Activated B cell treated with CpG ODN at 0.5 μM for 24 hours (primary cell): ENCODE measurements at regions of chr17 and their contacts with region 1.

Region 1: DNA sequence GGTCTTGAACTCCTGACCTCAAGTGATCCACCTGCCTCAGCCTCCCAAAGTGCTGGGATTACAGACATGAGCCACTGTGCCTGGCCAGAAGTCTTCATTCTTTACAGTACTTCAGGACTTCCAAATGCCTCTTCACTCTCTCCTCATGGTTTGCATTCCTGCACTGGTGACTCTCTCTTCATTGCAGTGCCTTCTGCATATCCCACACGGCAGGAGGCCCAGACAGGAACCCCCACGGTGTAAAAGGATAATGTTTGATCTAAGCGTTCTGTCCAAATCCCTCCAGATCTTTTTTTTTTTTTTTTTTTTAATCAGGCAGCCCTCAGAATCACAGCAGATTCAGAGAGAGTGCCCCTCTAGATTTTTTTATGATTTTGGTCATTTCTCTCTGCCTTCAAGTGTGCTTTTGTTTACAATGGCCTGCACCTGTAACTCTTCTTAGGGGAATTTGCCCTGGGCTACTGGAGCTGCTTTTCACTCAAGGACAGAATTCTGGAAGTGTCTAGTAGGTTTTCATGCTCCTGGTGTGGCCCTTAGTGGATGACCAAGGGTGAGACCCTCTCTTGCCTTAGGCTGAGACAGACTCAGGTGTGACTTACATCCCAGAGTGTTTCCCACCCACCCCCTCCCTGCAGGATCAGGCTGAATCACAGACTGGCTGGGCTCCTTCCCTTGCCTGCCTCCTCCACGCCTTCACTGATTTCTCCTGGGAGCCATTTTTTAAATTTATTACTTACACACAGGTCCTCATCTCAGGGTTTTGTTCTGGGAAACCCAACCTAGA is 19.8 kb upstream of the NF1 start:
- DNase-seq: no peak
- ATAC-seq: no peak
- H3K4me3 Mint-ChIP-seq: no peak overlapping the region
- H3K27ac Mint-ChIP-seq: no peak overlapping the region
- H3K4me1 Mint-ChIP-seq: no peaks in the 10 kb centered on the region
- H3K27me3 Mint-ChIP-seq: no peaks in the 10 kb centered on the region
- CTCF ChIP-seq: no peak

Region 2: DNA sequence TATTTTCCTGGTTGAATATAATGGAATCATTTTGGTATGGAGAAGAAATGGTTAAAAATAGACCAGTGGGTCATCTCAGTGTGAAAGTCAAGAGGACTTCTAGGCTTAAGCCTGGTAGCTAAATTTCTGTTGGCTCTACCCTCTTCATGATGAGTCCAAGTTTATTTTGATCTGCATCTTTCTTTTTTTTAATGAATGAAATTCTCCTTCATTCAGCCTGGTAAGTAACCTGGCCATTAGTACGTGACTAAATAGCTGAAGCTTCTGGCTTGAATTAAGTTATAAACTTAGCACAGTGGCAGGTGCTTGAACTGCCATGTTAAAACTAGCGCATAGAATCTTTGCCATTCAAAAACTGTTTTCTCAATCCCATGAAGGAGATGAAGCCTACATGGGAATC is 47.8 kb after region 1 on chr17:
- CTCF ChIA-PET with region 1: no interaction called
- POLR2A ChIA-PET with region 1: no interaction called
- intact Hi-C with region 1: no loop called
- DNase-seq: no peak
- ATAC-seq: no peak
- H3K4me3 Mint-ChIP-seq: no peak overlapping the region
- H3K27ac Mint-ChIP-seq: no peak overlapping the region
- H3K4me1 Mint-ChIP-seq: no peaks in the 10 kb centered on the region
- H3K27me3 Mint-ChIP-seq: no peaks in the 10 kb centered on the region
- CTCF ChIP-seq: no peak

Region 3: DNA sequence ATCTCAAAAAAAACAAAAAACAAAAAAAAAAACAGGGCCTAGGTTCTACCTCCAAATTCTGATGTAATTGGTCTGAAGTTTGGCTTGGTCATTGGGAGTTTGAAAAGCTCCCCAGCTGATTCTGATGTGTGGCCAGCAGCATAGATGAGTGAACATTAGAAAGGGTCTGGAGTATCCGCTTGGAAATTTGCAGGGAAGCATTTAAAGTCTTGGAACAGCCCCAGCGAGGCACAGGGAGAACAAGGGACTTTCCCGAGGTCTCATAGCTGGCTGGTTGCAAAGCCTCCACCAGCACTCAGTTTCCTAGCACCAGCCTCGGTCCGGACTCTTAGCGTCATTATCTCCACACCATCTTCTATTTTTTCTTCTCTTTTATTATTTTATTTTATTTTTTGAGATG is 387.3 kb after region 1 on chr17:
- CTCF ChIA-PET with region 1: no interaction called
- POLR2A ChIA-PET with region 1: no interaction called
- intact Hi-C with region 1: loop called (anchors 5 kb)
- DNase-seq: no peak
- ATAC-seq: no peak
- H3K4me3 Mint-ChIP-seq: no peak overlapping the region
- H3K27ac Mint-ChIP-seq: no peak overlapping the region
- H3K4me1 Mint-ChIP-seq: no peaks in the 10 kb centered on the region
- H3K27me3 Mint-ChIP-seq: no peaks in the 10 kb centered on the region
- CTCF ChIP-seq: no peak